Calu3 (cell line): ENCODE measurements at regions of chr6 and their contacts with region 1.

Region 1: GRCh38 chr6:142871910-142872331 is 73.1 kb downstream of the HIVEP2 start:
- DNase-seq: peak; percentile 66
- H3K4me3 Mint-ChIP-seq: peak overlapping the region; percentile 57
- H3K27ac Mint-ChIP-seq: peak overlapping the region; percentile 97
- H3K4me1 Mint-ChIP-seq: peaks cover 86% of the 10 kb centered on the region
- H3K27me3 Mint-ChIP-seq: no peaks in the 10 kb centered on the region
- CTCF ChIP-seq: no peak

Region 2: GRCh38 chr6:142756215-142756634 is 115.7 kb before region 1 on chr6:
- CTCF ChIA-PET with region 1: no interaction called
- intact Hi-C with region 1: loop called (anchors 5 kb)
- DNase-seq: peak; percentile 58
- H3K4me3 Mint-ChIP-seq: no peak overlapping the region
- H3K27ac Mint-ChIP-seq: peak overlapping the region; percentile 73
- H3K4me1 Mint-ChIP-seq: peaks cover 22% of the 10 kb centered on the region
- H3K27me3 Mint-ChIP-seq: no peaks in the 10 kb centered on the region
- CTCF ChIP-seq: no peak

Region 3: GRCh38 chr6:142838821-142839685 is 32.9 kb before region 1 on chr6:
- CTCF ChIA-PET with region 1: interaction called, 3 read pairs
- intact Hi-C with region 1: loop called (anchors 5 kb)
- DNase-seq: no peak
- H3K4me3 Mint-ChIP-seq: peak overlapping the region; percentile 50
- H3K27ac Mint-ChIP-seq: peak overlapping the region; percentile 91
- H3K4me1 Mint-ChIP-seq: peaks cover 40% of the 10 kb centered on the region
- H3K27me3 Mint-ChIP-seq: no peaks in the 10 kb centered on the region
- CTCF ChIP-seq: no peak

Region 4: DNA sequence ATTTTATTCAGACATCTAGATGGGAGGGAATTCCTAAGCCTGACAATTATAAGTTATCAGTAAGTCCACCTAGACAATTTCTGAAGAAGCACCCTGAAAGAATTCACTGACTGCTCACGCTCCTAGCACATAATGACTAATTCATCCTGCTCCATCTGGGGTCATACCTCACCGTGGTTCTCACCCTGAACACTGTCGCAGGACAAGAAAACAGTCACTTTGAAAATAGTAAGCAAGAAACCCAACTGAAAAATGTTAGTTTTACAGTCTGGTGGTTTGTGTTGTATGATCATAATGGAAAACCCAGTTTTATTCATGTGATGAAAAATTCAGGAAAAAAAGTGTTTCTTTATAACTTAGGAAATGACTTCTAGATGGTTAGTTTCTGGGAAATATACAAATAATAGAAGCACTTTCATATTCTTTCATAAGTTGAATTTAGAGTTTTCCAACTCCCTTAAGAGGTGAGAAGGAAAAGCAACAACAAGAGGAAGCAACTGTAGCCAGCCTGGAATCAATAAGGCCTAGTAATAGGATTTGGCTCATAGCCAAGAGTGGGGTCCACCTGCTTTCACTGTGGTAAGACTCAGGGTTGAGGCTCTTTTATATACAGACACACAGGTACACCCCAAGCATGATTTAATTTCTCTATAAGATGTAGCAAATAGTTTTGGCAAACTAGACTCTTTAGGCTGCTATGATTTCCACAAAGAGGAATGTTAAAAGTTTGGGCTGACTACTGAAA is 21.1 kb before region 1 on chr6:
- CTCF ChIA-PET with region 1: interaction called, 8 read pairs
- intact Hi-C with region 1: loop called (anchors 2 kb)
- DNase-seq: no peak
- H3K4me3 Mint-ChIP-seq: no peak overlapping the region
- H3K27ac Mint-ChIP-seq: peak overlapping the region; percentile 75
- H3K4me1 Mint-ChIP-seq: peaks cover 79% of the 10 kb centered on the region
- H3K27me3 Mint-ChIP-seq: no peaks in the 10 kb centered on the region
- CTCF ChIP-seq: no peak

Region 5: GRCh38 chr6:142885182-142885867 is 13.4 kb after region 1 on chr6:
- CTCF ChIA-PET with region 1: interaction called, 15 read pairs
- intact Hi-C with region 1: no loop called
- DNase-seq: peak; percentile 71
- H3K4me3 Mint-ChIP-seq: peak overlapping the region; percentile 47
- H3K27ac Mint-ChIP-seq: peak overlapping the region; percentile 80
- H3K4me1 Mint-ChIP-seq: peaks cover 38% of the 10 kb centered on the region
- H3K27me3 Mint-ChIP-seq: no peaks in the 10 kb centered on the region
- CTCF ChIP-seq: no peak

Region 6: GRCh38 chr6:143912671-143913070 is 1040.8 kb after region 1 on chr6:
- CTCF ChIA-PET with region 1: no interaction called
- intact Hi-C with region 1: no loop called
- DNase-seq: no peak
- H3K4me3 Mint-ChIP-seq: no peak overlapping the region
- H3K27ac Mint-ChIP-seq: no peak overlapping the region
- H3K4me1 Mint-ChIP-seq: no peaks in the 10 kb centered on the region
- H3K27me3 Mint-ChIP-seq: peaks cover 62% of the 10 kb centered on the region
- CTCF ChIP-seq: no peak